PC-9 (cell line): ENCODE measurements at regions of chr9 and their contacts with region 1.

Region 1: GRCh38 chr9:98807070-98807810 is at the start of gene GALNT12:
- DNase-seq: peak; percentile 40 to 56
- H3K4me3 ChIP-seq: peak within 1 kb of the TSS; percentile 87
- H3K27ac ChIP-seq: peak within 1 kb of the TSS; percentile 77
- H3K4me1 ChIP-seq: peaks cover 86% of the 10 kb centered on the region
- H3K27me3 ChIP-seq: no peaks in the 10 kb centered on the region
- CTCF ChIP-seq: no peak
- total RNA-seq, gene GALNT12: 50.3 and 52.9 TPM in 2 replicates

Region 2: GRCh38 chr9:98558575-98558974 is 248.7 kb before region 1 on chr9:
- CTCF ChIA-PET with region 1: no interaction called
- POLR2A ChIA-PET with region 1: interaction called, 14 read pairs
- intact Hi-C with region 1: no loop called
- DNase-seq: no peak
- H3K4me3 ChIP-seq: no peak overlapping the region
- H3K27ac ChIP-seq: no peak overlapping the region
- H3K4me1 ChIP-seq: 0 out of 2 replicates have a peak, but pooled peaks cover 5% of the 10 kb centered on the region
- H3K27me3 ChIP-seq: no peaks in the 10 kb centered on the region
- CTCF ChIP-seq: no peak

Region 3: GRCh38 chr9:98879963-98880310 is 72.7 kb after region 1 on chr9:
- CTCF ChIA-PET with region 1: no interaction called
- POLR2A ChIA-PET with region 1: no interaction called
- intact Hi-C with region 1: loop called (anchors 2 kb)
- DNase-seq: no peak
- H3K4me3 ChIP-seq: no peak overlapping the region
- H3K27ac ChIP-seq: no peak overlapping the region
- H3K4me1 ChIP-seq: no peaks in the 10 kb centered on the region
- H3K27me3 ChIP-seq: peaks cover 67% of the 10 kb centered on the region
- CTCF ChIP-seq: no peak

Region 4: GRCh38 chr9:99140685-99141314 is 333.6 kb after region 1 on chr9:
- CTCF ChIA-PET with region 1: interaction called, 5 read pairs
- POLR2A ChIA-PET with region 1: no interaction called
- intact Hi-C with region 1: loop called (anchors 1 kb)
- DNase-seq: peak in 1 of 2 experiments; percentile 34
- H3K4me3 ChIP-seq: no peak overlapping the region
- H3K27ac ChIP-seq: no peak overlapping the region
- H3K4me1 ChIP-seq: no peaks in the 10 kb centered on the region
- H3K27me3 ChIP-seq: no peaks in the 10 kb centered on the region
- CTCF ChIP-seq: peak; percentile 74

Region 5: GRCh38 chr9:99221621-99222415 is 414.6 kb after region 1 on chr9 and contains the starts of genes ALG2 and SEC61B:
- CTCF ChIA-PET with region 1: no interaction called
- POLR2A ChIA-PET with region 1: no interaction called
- intact Hi-C with region 1: loop called (anchors 5 kb)
- DNase-seq: peak; percentile 79 to 92
- H3K4me3 ChIP-seq: peak within 1 kb of the TSS; percentile 91
- H3K27ac ChIP-seq: peak within 1 kb of the TSS; percentile 83
- H3K4me1 ChIP-seq: peaks cover 26% of the 10 kb centered on the region
- H3K27me3 ChIP-seq: no peaks in the 10 kb centered on the region
- CTCF ChIP-seq: no peak; the same call in 1 of the 2 replicates
- total RNA-seq, gene ALG2: 30.2 and 32.6 TPM in 2 replicates
- total RNA-seq, gene SEC61B: 97.7 and 163 TPM in 2 replicates